ENCODE measurements at regions of chr4 and their contacts with region 1.

Region 1: GRCh38 chr4:148787831-148788477 is 345.7 kb upstream of the NR3C2 start:
- DNase-seq: peak in 1 of 3 donors; percentile 48
- ATAC-seq: peak; percentile 88
- H3K4me3 ChIP-seq: no peak overlapping the region
- H3K4me1 ChIP-seq: peaks cover 11% of the 10 kb centered on the region
- CTCF ChIP-seq: no peak

Region 2: GRCh38 chr4:149031399-149031798 is 243.4 kb after region 1 on chr4:
- intact Hi-C with region 1: loop called in 1 of 2 experiments (anchors 5 kb)
- DNase-seq: peak in 1 of 3 donors; percentile 67
- ATAC-seq: peak; percentile 80
- H3K4me3 ChIP-seq: no peak overlapping the region
- H3K4me1 ChIP-seq: no peaks in the 10 kb centered on the region
- CTCF ChIP-seq: no peak

Region 3: GRCh38 chr4:149065753-149066152 is 277.8 kb after region 1 on chr4:
- intact Hi-C with region 1: no loop called
- DNase-seq: no peak
- ATAC-seq: no peak
- H3K4me3 ChIP-seq: no peak overlapping the region
- H3K4me1 ChIP-seq: no peaks in the 10 kb centered on the region
- CTCF ChIP-seq: no peak

Measured in mucosa of descending colon (tissue), 3 donors.